Sigmoid colon (tissue), 7 donors: ENCODE measurements at regions of chr10 and their contacts with region 1.

Region 1: GRCh38 chr10:103772096-103772845 is 83.1 kb downstream of the SH3PXD2A start:
- DNase-seq: peak; percentile 96
- H3K4me3 ChIP-seq: peak overlapping the region; percentile 22 to 49 (median 44)
- H3K27ac ChIP-seq: peak overlapping the region; percentile 68 to 82 (median 76)
- H3K4me1 ChIP-seq: peaks cover 0 to 17% (median 16%) of the 10 kb centered on the region in 4 donors
- H3K27me3 ChIP-seq: no peaks in the 10 kb centered on the region
- CTCF ChIP-seq: no peak
- EP300 ChIP-seq: no peak
- POLR2A ChIP-seq: no peak

Region 2: GRCh38 chr10:103678178-103678526 is 94.1 kb before region 1 on chr10:
- intact Hi-C with region 1: no loop called
- DNase-seq: peak; percentile 98
- H3K4me3 ChIP-seq: peak overlapping the region; percentile 33 to 53 (median 42)
- H3K27ac ChIP-seq: peak overlapping the region; percentile 77 to 87 (median 79)
- H3K4me1 ChIP-seq: peaks cover 0 to 36% (median 31%) of the 10 kb centered on the region in 4 donors
- H3K27me3 ChIP-seq: no peaks in the 10 kb centered on the region
- CTCF ChIP-seq: no peak
- EP300 ChIP-seq: peak in 2 of 4 donors; percentile 46 to 85
- POLR2A ChIP-seq: peak in 1 of 2 donors; percentile 29

Region 3: GRCh38 chr10:103726637-103727036 is 45.6 kb before region 1 on chr10:
- intact Hi-C with region 1: no loop called
- DNase-seq: no peak
- H3K4me3 ChIP-seq: no peak overlapping the region
- H3K27ac ChIP-seq: no peak overlapping the region
- H3K4me1 ChIP-seq: peaks cover 0 to 14% (median 12%) of the 10 kb centered on the region in 4 donors
- H3K27me3 ChIP-seq: no peaks in the 10 kb centered on the region
- CTCF ChIP-seq: no peak
- EP300 ChIP-seq: no peak
- POLR2A ChIP-seq: no peak

Region 4: GRCh38 chr10:103736763-103737162 is 35.5 kb before region 1 on chr10:
- intact Hi-C with region 1: loop called (anchors 5 kb)
- DNase-seq: no peak
- H3K4me3 ChIP-seq: no peak overlapping the region
- H3K27ac ChIP-seq: no peak overlapping the region
- H3K4me1 ChIP-seq: peaks cover 0 to 36% (median 33%) of the 10 kb centered on the region in 4 donors
- H3K27me3 ChIP-seq: no peaks in the 10 kb centered on the region
- CTCF ChIP-seq: no peak
- EP300 ChIP-seq: no peak
- POLR2A ChIP-seq: no peak